ENCODE measurements at regions of chrX and their contacts with region 1.

Region 1: DNA sequence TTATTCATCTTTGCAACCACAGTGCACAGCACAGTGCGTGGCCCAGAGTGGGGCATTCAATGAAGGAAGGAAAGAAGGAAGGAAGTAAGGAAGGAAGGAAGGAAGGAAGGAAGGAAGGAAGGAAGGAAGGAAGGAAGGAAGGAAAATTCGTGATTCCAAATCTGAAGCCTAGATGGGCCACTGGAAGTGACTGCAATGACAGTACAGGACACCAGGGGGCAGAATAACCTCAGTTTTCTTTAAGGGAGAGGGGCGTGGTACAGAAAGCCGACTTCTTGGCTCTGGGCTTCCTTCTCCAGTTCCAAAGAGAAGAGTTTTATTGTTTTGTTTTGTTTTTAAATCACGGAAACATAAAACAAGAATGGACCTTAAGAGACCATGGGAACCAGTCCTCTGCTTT is 47.8 kb downstream of the APLN start:
- DNase-seq: peak; percentile 36
- ATAC-seq: peak; percentile 74
- H3K4me3 ChIP-seq: no peak overlapping the region
- H3K27ac ChIP-seq: no peak overlapping the region
- H3K4me1 ChIP-seq: peaks cover 2% of the 10 kb centered on the region; the same call in 1 of the 2 replicates
- H3K27me3 ChIP-seq: peaks cover 3% of the 10 kb centered on the region; the same call in 1 of the 2 replicates
- CTCF ChIP-seq: peak; percentile 73
- POLR2A ChIP-seq: no peak
- RAD21 ChIP-seq: peak; percentile 83

Region 2: GRCh38 chrX:129726307-129727111 is 119.6 kb after region 1 on chrX:
- CTCF ChIA-PET with region 1: interaction called, 7 read pairs
- POLR2A ChIA-PET with region 1: no interaction called
- dilution Hi-C with region 1: no loop called
- in situ Hi-C with region 1: loop called (anchors 5 kb)
- intact Hi-C with region 1: loop called (anchors 1 kb)
- DNase-seq: peak; percentile 69
- ATAC-seq: peak; percentile 93
- H3K4me3 ChIP-seq: no peak overlapping the region
- H3K27ac ChIP-seq: no peak overlapping the region
- H3K4me1 ChIP-seq: no peaks in the 10 kb centered on the region
- H3K27me3 ChIP-seq: peaks cover 20% of the 10 kb centered on the region
- CTCF ChIP-seq: peak; percentile 74
- POLR2A ChIP-seq: no peak
- RAD21 ChIP-seq: peak; percentile 91

Region 3: GRCh38 chrX:129905787-129906580 is 299.1 kb after region 1 on chrX and contains the start of gene UTP14A:
- CTCF ChIA-PET with region 1: no interaction called
- POLR2A ChIA-PET with region 1: no interaction called
- dilution Hi-C with region 1: no loop called
- in situ Hi-C with region 1: no loop called
- intact Hi-C with region 1: loop called (anchors 2 kb)
- DNase-seq: peak; percentile 90
- ATAC-seq: peak; percentile 97
- H3K4me3 ChIP-seq: peak within 1 kb of the TSS; percentile 70
- H3K27ac ChIP-seq: peak within 1 kb of the TSS; percentile 68
- H3K4me1 ChIP-seq: no peaks in the 10 kb centered on the region
- H3K27me3 ChIP-seq: no peaks in the 10 kb centered on the region
- CTCF ChIP-seq: no peak
- POLR2A ChIP-seq: peak; percentile 60; the same call in 1 of the 2 replicates
- RAD21 ChIP-seq: no peak
- total RNA-seq, gene UTP14A: 15.2 and 25.3 TPM in 2 replicates

Region 4: DNA sequence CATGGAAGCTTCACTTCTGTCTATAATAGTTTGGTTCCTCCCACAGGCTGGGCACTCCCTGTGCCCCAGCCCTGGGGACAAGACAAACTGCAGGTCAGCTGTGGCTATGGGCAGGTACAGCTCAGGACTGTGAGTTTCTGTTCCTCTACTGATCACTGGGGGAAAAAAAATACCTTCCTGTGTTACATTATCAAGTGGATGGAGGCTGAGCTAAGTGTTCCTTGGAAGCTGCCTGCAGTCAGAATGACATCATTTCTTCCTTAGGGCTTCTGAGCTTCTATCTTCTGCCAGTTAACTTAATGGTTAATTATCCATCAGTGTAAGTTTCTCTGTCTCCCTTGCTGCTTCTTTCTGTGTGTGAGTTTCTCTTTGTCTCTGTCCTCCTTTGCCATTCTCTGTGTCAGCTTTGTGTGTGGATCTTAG is 569.4 kb after region 1 on chrX:
- CTCF ChIA-PET with region 1: no interaction called
- POLR2A ChIA-PET with region 1: no interaction called
- dilution Hi-C with region 1: no loop called
- in situ Hi-C with region 1: loop called (anchors 25 kb)
- intact Hi-C with region 1: no loop called
- DNase-seq: peak; percentile 25
- ATAC-seq: no peak
- H3K4me3 ChIP-seq: no peak overlapping the region
- H3K27ac ChIP-seq: no peak overlapping the region
- H3K4me1 ChIP-seq: peaks cover 7% of the 10 kb centered on the region
- H3K27me3 ChIP-seq: peaks cover 2% of the 10 kb centered on the region; the same call in 1 of the 2 replicates
- CTCF ChIP-seq: no peak
- POLR2A ChIP-seq: no peak
- RAD21 ChIP-seq: no peak

Region 5: GRCh38 chrX:130902783-130903613 is 1296.1 kb after region 1 on chrX and contains the start of gene ENOX2:
- CTCF ChIA-PET with region 1: no interaction called
- POLR2A ChIA-PET with region 1: no interaction called
- dilution Hi-C with region 1: no loop called
- in situ Hi-C with region 1: loop called (anchors 25 kb)
- intact Hi-C with region 1: no loop called
- DNase-seq: peak; percentile 96
- ATAC-seq: peak; percentile 99
- H3K4me3 ChIP-seq: peak within 1 kb of the TSS; percentile 68
- H3K27ac ChIP-seq: peak within 1 kb of the TSS; percentile 85
- H3K4me1 ChIP-seq: no peaks in the 10 kb centered on the region
- H3K27me3 ChIP-seq: peaks cover 2% of the 10 kb centered on the region; the same call in 1 of the 2 replicates
- CTCF ChIP-seq: no peak
- POLR2A ChIP-seq: peak; percentile 85
- RAD21 ChIP-seq: no peak
- total RNA-seq, gene ENOX2: 11.1 and 11.8 TPM in 2 replicates

Measured in IMR-90 (cell line).